ENCODE measurements at regions of chr2 and their contacts with region 1.

Region 1: GRCh38 chr2:103161456-103162289 is 399.8 kb downstream of the TMEM182 start:
- DNase-seq: peak; percentile 70
- H3K4me3 Mint-ChIP-seq: no peak overlapping the region
- H3K27ac Mint-ChIP-seq: peak overlapping the region; percentile 33
- H3K4me1 Mint-ChIP-seq: peaks cover 11% of the 10 kb centered on the region
- H3K27me3 Mint-ChIP-seq: peaks cover 61% of the 10 kb centered on the region
- CTCF ChIP-seq: peak; percentile 93

Region 2: DNA sequence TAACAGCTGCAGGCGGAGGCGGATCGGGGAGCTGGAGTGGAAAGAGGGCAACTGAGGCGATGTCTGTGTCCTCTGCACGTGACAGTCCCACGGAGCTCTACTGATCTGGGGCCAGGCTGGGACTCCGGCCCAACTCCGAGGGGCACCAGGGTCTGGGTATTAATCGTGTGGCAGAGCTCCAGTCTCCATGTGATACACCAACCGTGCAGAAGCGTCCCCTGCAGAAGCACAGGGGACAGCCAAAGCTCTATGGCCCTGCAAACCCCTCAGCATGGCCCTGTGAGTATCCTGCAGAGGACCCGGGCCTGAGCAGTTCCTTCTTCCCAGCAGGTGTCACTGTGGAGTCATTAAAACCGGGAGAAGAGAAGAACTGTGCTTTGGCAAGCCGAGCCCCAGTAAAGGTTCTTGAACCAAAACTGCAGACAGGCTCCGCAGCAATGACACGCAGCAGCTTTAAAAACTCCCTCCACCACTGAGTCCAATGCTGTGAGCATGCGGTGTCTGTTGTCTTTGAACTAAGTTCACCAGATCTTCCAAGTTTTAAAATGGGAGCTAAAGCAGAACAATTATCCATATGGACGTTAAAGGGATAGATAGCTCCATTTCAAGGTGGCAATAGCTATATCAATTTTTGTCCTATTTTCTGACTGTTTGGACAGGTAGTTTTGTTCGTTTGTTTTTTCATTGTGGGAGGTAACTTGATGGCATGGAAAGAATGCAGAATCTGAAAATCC is 320.4 kb before region 1 on chr2:
- CTCF ChIA-PET with region 1: interaction called, 24 read pairs
- POLR2A ChIA-PET with region 1: no interaction called
- intact Hi-C with region 1: loop called (anchors 1 kb)
- DNase-seq: peak; percentile 65
- H3K4me3 Mint-ChIP-seq: no peak overlapping the region
- H3K27ac Mint-ChIP-seq: no peak overlapping the region
- H3K4me1 Mint-ChIP-seq: no peaks in the 10 kb centered on the region
- H3K27me3 Mint-ChIP-seq: no peaks in the 10 kb centered on the region
- CTCF ChIP-seq: peak; percentile 55

Region 3: DNA sequence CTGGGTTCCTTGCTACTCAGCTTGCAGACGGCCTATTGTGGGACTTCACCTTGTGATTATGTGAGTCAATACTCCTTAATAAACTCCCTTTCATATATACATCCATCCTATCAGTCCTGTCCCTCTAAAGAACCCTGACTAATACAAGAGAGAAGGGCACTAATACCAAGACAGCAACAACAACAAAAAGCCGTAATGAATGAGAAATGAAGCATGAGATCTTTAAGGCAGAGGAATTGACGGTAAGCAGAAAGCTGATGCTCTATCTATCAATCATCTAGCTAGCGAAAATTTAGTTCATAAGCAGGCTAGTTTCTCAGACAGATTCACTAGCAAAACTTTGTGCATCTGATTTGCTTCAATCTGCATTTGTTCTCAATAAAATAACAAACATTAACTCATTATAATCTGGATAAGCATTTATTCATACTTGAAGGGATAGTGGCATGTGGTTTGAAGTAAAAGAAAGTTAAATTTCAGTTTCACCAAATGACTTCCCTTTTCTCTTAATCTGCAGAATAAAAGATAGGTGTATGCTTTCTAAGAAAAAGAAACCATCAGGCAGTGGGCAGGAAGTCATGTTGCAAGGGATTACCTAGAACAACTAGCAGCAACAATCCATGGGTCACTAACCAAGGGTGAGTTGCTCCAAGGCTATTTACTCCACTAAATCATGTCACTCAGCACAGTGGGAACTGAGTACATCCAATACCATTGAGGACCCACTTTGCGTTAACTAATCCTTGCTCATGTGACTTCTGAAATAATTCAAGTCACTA is 23.4 kb before region 1 on chr2:
- CTCF ChIA-PET with region 1: interaction called, 20 read pairs
- POLR2A ChIA-PET with region 1: no interaction called
- intact Hi-C with region 1: no loop called
- DNase-seq: no peak
- H3K4me3 Mint-ChIP-seq: no peak overlapping the region
- H3K27ac Mint-ChIP-seq: no peak overlapping the region
- H3K4me1 Mint-ChIP-seq: no peaks in the 10 kb centered on the region
- H3K27me3 Mint-ChIP-seq: peaks cover 47% of the 10 kb centered on the region
- CTCF ChIP-seq: no peak

Region 4: DNA sequence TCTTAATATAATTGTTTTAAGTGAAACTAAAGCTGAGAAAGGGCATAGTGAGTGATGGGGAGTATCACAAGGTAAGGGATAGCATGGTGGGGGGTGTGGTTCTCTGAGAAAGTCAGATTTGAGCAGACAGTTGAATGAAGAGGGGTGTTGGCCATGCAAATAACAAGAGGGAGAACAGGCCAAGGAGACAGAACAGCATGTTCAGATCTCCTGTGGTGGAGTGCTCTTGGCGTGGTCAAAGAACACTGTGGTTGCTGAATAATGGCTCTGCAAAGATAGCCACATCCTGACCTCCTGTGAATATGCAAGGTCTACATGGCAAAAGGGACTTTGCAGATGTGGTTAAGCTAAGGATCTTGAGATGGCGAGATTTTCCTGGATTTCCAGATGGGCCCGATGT is 10.6 kb before region 1 on chr2:
- CTCF ChIA-PET with region 1: interaction called, 19 read pairs
- POLR2A ChIA-PET with region 1: interaction called, 3 read pairs
- intact Hi-C with region 1: no loop called
- DNase-seq: no peak
- H3K4me3 Mint-ChIP-seq: no peak overlapping the region
- H3K27ac Mint-ChIP-seq: no peak overlapping the region
- H3K4me1 Mint-ChIP-seq: peaks cover 13% of the 10 kb centered on the region
- H3K27me3 Mint-ChIP-seq: peaks cover 60% of the 10 kb centered on the region
- CTCF ChIP-seq: no peak

Region 5: GRCh38 chr2:103459291-103459690 is 297.6 kb after region 1 on chr2:
- CTCF ChIA-PET with region 1: no interaction called
- POLR2A ChIA-PET with region 1: no interaction called
- intact Hi-C with region 1: loop called (anchors 5 kb)
- DNase-seq: no peak
- H3K4me3 Mint-ChIP-seq: no peak overlapping the region
- H3K27ac Mint-ChIP-seq: no peak overlapping the region
- H3K4me1 Mint-ChIP-seq: no peaks in the 10 kb centered on the region
- H3K27me3 Mint-ChIP-seq: peaks cover 85% of the 10 kb centered on the region
- CTCF ChIP-seq: no peak

Region 6: DNA sequence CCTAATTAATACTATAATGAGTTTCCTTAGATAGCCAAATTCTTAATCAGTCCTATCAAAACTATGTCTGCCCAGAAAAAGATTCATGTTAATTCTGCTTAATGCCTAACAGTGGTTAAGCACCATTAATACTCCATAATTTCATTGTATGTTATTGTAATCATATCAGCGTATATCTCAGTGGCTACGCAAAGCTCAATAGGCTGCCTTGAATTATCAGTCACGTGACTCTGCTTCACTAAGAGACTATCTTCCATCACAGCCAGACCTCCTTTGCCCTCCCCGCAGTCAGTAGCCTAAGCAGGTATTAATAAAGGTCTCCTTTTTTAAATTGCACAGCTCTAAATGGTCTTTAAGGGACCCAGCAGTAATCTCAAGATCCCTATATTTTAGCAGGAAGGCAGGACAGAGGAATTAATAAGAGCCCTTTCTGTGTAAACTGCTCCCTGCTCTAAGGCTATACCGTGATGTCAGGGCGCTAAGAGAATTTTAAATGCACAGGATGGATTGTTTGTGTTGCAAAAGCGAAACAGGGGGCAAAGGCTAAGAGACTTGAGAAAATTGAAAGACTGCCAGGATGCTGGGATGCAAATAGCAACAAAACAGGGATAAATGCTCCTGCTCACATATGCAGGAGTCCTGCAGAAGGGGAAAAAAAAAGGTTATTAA is 1476.7 kb after region 1 on chr2:
- CTCF ChIA-PET with region 1: no interaction called
- POLR2A ChIA-PET with region 1: no interaction called
- intact Hi-C with region 1: loop called (anchors 5 kb)
- DNase-seq: no peak
- H3K4me3 Mint-ChIP-seq: no peak overlapping the region
- H3K27ac Mint-ChIP-seq: no peak overlapping the region
- H3K4me1 Mint-ChIP-seq: no peaks in the 10 kb centered on the region
- H3K27me3 Mint-ChIP-seq: peaks cover 46% of the 10 kb centered on the region
- CTCF ChIP-seq: no peak

Region 7: DNA sequence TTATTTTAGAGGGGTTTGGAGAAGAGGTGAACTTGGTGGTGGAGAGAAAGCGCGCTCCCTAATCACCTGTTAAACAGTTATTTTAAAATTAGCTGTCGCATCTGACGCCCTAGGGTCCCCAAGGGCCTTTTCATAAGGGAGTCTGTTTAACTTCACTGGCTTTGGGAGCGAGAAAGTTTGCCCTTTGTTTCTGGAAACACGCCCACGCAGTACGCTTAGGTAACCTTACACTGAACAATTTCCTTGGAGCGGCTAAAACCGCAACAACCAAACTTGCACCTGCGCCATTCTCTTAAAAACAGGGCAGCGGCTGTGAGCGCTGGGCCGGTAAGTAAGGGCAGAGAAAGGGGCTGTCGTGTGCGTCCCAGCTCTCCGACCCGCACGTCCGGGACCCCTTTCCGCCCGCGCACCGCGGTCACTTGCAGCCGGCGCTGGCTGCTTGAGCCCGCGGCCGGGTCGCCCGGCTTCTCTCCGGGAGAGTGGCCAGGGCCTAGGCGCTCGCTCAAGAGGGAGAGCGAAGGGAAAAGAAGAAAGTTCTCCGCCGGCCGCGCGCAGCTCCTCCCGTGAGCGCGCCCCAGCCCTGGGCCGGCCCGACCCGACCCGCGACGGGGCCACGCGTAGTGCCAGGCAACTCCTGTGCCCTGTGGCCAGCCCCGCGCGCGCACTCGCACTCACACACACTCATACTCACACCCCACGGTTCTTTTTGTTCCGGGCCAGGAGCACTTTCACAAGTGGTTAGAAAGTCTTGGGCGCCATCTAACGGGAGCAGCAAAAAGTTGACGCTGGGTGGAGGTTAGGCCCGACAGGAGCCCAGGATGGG is 1711.4 kb after region 1 on chr2:
- CTCF ChIA-PET with region 1: interaction called, 13 read pairs
- POLR2A ChIA-PET with region 1: no interaction called
- intact Hi-C with region 1: loop called (anchors 1 kb)
- DNase-seq: peak; percentile 84
- H3K4me3 Mint-ChIP-seq: peak overlapping the region; percentile 65
- H3K27ac Mint-ChIP-seq: no peak overlapping the region
- H3K4me1 Mint-ChIP-seq: no peaks in the 10 kb centered on the region
- H3K27me3 Mint-ChIP-seq: no peaks in the 10 kb centered on the region
- CTCF ChIP-seq: peak; percentile 65